Posterior cingulate gyrus (tissue), 11 donors: ENCODE measurements at regions of chr7 and their contacts with region 1.

Region 1: DNA sequence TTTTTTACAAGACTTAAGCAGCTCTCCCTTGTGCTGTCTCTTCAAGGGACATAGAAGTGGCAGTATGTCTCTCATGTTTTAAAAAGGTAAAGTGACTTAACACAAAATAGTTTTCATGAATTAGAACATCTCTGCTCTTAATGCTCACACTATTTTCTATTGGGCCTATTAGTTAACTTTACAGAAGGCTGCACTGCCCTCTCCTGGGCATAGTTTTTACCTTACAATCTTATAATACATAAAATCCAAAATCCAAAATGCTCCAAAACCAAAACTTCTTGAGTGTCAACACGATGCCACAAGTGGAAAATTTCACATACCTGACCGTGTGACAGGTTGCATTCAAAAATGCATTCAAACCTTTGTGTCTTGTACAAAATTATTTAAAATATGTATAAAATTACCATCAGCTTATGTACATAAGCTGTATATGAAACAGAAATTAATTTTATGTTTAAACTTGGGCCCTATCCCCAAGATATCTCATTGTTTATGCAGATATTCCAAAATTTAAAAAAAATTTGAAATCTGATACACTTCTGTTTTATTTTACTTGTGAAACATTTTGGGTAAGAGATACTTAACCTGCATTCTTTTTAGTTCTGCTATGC is 25.8 kb downstream of the TES start:
- DNase-seq: peak in 4 of 10 donors; percentile 22 to 54 (median 29)

Region 2: DNA sequence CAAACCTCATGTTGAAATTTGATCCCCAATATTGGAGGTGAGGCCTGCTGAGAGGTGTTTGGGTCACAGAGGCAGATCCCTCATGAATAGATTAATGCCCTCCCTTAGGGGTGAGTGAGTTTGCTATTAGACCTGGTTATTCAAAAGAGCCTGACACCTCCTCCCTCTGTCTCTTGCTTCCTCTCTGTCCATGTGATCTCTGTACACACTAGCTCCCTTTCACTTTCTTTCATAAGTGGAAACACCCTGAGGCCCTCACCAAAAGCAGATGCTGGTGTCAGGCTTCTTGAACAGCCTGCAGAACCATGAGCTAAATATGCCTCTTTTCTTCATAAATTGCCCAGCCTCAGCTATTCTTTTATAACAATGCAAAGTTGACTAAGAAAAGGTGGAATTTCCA is 867.1 kb before region 1 on chr7:
- intact Hi-C with region 1: no loop called
- DNase-seq: no peak

Region 3: DNA sequence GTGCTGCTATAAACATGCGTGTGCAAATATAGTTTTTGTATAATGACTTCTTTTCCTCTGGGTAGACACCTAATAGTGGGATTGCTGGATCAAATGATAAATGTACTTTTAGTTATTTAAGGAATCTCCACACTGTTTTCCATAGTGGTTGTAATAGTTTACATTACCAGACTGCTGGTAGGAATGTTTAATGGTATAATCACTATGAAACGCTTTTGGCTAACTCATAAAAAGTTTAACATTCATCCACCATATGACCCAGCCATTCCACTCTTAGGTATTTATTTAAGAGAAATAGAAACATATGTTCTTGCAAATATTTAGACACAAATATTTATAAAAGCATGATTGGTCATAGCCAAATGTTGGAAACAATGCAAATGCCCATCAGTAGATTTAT is 173.5 kb before region 1 on chr7:
- intact Hi-C with region 1: no loop called
- DNase-seq: no peak

Region 4: GRCh38 chr7:116138202-116138801 is 97.8 kb before region 1 on chr7:
- intact Hi-C with region 1: loop called (anchors 2 kb)
- DNase-seq: no peak

Region 5: GRCh38 chr7:116173051-116174028 is 62.8 kb before region 1 on chr7:
- intact Hi-C with region 1: loop called (anchors 1 kb)
- DNase-seq: no peak

Region 6: GRCh38 chr7:116195451-116195850 is 40.7 kb before region 1 on chr7:
- intact Hi-C with region 1: no loop called
- DNase-seq: no peak